Right cardiac atrium (tissue), 5 donors: ENCODE measurements at regions of chr12 and their contacts with region 1.

Region 1: DNA sequence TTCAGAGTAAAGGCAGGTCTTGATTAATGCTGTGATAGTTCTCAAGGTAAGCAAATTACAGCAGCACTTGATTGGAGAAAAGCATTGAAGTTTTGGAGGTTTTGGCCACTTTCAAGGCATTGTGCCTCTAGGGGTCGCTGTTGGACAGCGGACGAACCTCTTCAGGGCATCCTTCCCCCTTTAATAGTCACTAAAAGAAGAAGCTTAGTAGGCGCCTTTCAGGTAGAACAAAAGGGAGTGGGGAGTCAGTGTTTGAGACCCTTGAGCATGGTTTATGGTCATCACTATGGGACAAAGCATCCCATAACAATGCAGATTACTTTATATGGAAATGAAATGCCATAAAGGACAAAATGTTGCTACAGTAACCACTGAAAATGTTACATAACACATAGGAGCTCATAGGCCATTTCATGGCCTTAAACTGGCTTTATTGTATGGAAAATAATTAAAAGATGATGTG is 199.5 kb upstream of the DCN start:
- DNase-seq: peak; percentile 85 to 94 (median 87)
- ATAC-seq: peak; percentile 85 to 89
- H3K4me3 ChIP-seq: peak overlapping the region; percentile 53
- H3K27ac ChIP-seq: no peak overlapping the region
- H3K4me1 ChIP-seq: peaks cover 2% of the 10 kb centered on the region
- H3K27me3 ChIP-seq: no peaks in the 10 kb centered on the region

Region 2: GRCh38 chr12:91577586-91578539 is 195.8 kb after region 1 on chr12:
- intact Hi-C with region 1: loop called in 1 of 4 experiments (anchors 5 kb)
- DNase-seq: no peak
- ATAC-seq: peak; percentile 33 to 57
- H3K4me3 ChIP-seq: peak overlapping the region; percentile 36
- H3K27ac ChIP-seq: no peak overlapping the region
- H3K4me1 ChIP-seq: no peaks in the 10 kb centered on the region
- H3K27me3 ChIP-seq: no peaks in the 10 kb centered on the region

Region 3: DNA sequence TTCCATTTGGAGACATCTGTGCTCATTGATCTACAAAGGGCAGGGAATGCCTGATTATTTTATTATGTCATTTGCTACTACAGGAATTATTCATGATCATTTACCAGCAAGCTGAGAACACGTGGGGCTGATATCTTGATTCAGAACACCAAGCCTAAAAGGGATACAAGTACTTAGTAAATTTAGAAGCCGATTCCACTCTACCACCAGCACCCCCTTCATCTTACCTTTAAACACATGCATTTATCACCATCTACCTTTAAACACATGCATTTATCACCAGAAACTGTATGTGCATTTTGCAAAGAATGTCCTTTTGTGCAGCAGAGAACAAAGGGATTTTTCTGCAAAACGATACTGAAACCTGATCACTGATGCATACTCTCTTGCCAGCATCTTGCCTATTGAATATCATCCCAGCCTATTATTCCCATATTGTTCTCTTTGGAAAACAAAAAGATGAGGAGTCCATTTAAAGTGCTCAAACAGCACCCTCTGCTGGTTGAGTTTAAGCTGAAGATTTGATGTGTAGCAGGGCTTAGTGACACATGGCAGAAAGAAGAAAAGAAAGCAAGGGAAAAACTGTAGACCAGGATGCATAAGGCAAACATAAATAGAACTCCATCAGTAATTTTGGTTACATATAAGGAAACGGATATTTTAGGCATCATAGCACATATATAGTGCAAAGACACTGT is 1188.1 kb after region 1 on chr12:
- intact Hi-C with region 1: loop called in 1 of 4 experiments (anchors 10 kb)
- DNase-seq: no peak
- ATAC-seq: peak; percentile 73 to 77
- H3K4me3 ChIP-seq: no peak overlapping the region
- H3K27ac ChIP-seq: no peak overlapping the region
- H3K4me1 ChIP-seq: peaks cover 4% of the 10 kb centered on the region
- H3K27me3 ChIP-seq: no peaks in the 10 kb centered on the region

Region 4: GRCh38 chr12:92649511-92650227 is 1267.6 kb after region 1 on chr12:
- intact Hi-C with region 1: loop called in 2 of 4 experiments (anchors 10 kb)
- DNase-seq: peak in 2 of 3 donors; percentile 36 to 50
- ATAC-seq: peak; percentile 94
- H3K4me3 ChIP-seq: no peak overlapping the region
- H3K27ac ChIP-seq: no peak overlapping the region
- H3K4me1 ChIP-seq: no peaks in the 10 kb centered on the region
- H3K27me3 ChIP-seq: no peaks in the 10 kb centered on the region